ENCODE measurements at regions of chr4 and their contacts with region 1.

Region 1: GRCh38 chr4:74098450-74098994 is 473 bp downstream of the CXCL2 start:
- DNase-seq: no peak

Region 2: DNA sequence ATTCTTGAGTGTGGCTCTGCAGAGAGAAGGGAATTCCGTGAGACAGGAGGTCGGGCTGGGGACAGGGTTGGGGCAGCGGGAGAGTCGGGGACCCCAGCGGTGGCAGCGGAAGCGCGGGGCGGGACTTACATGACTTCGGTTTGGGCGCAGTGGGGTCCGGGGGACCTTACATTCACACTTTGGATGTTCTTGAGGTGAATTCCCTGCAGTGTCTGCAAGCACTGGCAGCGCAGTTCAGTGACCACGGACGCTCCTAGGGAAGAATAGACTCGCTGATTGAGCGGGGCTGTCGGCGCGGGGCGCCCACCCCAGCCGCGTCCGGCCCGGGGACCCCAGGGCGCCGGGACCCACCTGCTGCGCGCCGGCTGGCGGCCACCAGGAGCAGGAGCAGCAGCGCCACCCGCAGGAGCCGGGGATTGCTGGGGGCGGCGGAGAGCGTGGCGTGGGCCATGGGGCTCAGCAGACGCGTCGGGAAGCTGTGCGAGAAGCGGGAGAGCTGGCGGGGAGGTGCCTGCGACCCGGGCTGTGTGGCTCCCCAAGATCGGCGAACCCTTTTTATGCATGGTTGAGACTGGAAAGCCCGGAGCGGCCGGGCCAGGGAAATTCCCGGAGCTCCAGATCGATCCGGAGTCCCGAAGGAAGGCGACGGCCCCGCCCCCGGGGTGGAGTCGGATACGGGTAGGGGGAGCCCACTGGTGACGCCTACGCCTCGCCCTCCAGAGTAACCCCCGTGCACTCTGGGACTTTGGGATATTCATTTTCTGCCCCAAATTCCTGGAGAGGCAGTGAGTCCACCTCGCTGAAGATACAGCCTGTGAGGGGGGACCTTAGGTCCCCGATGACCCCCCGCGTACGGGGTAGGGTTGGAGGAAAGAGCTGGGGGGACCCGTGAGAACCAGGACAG is 60.1 kb before region 1 on chr4 and contains the start of gene CXCL3:
- CTCF ChIA-PET with region 1: interaction called, 6 read pairs
- POLR2A ChIA-PET with region 1: interaction called, 12 read pairs
- DNase-seq: peak; percentile 56

Region 3: DNA sequence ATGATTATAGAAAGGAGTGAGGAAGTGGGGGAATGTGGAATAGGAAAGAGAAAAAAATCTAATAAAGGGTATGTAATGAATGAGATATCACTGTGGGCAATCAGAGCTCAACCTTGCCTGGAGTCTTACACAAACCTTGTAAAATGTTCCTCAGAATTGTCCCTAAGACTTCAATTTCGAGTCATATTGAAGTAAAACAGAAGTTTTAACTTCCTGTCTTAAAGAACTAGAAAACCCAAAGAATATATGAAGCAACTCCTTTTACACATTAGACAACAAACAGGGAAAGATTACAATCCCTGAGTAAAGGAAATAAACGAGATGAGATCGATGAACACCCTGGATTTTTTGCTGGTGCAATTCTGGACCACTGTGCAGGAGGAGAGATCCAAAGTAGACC is 17.5 kb before region 1 on chr4:
- CTCF ChIA-PET with region 1: no interaction called
- POLR2A ChIA-PET with region 1: no interaction called
- DNase-seq: no peak